Tibial artery (tissue), 4 donors: ENCODE measurements at regions of chr9 and their contacts with region 1.

Region 1: GRCh38 chr9:69971643-69972449 is 71.8 kb upstream of the MAMDC2 start:
- DNase-seq: peak; percentile 83
- H3K4me3 ChIP-seq: no peak overlapping the region
- H3K27ac ChIP-seq: no peak overlapping the region
- H3K4me1 ChIP-seq: peaks cover 0 to 15% (median 0%) of the 10 kb centered on the region in 4 donors
- H3K27me3 ChIP-seq: no peaks in the 10 kb centered on the region
- CTCF ChIP-seq: peak; percentile 87 to 92

Region 2: DNA sequence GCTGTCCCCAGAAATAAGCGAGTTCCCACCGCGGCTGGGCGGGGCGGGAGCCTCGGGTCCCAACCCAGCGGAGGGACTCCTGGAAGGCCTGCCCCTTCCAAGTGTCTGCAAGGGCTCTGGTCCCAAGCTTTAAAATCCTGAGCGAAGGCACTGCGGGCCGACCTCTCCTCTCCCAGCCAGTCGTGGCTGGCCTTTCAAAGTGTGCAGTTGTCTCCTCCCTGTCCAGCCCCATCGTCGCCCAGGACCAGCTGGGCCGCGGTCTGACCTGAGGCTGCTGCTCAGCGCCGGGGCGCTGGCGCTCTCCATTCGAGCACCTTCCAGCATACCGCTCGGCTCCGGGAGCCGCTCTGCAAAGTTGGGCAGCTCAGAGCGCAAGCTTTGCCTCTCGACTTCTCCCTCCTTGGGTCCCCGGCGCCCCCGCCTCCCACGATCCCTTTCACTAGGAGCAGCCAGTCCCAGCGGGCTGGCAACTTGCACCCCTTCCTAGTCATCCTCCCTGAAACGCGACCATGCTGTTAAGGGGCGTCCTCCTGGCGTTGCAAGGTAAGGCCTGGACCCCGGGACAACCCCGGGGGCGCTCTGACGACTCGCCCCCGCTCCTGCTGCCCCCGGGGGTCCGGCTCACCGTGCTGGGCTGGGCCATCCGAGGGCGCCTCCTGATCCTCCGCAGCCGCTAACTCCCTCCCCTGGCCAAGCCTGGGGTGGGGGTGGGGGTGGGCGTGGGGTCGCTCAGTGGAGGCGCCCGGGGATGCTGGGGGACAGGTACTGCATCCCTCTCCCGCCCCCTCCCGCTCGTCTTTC is 72.0 kb after region 1 on chr9 and contains the start of gene MAMDC2:
- intact Hi-C with region 1: loop called (anchors 10 kb)
- DNase-seq: peak; percentile 77 to 84
- H3K4me3 ChIP-seq: peak within 1 kb of the TSS; percentile 77 to 82
- H3K27ac ChIP-seq: peak within 1 kb of the TSS; percentile 86 to 89
- H3K4me1 ChIP-seq: peaks cover 0 to 58% (median 41%) of the 10 kb centered on the region in 4 donors
- H3K27me3 ChIP-seq: no peaks in the 10 kb centered on the region
- CTCF ChIP-seq: no peak

Region 3: GRCh38 chr9:70229579-70229978 is 257.7 kb after region 1 on chr9:
- intact Hi-C with region 1: loop called (anchors 10 kb)
- DNase-seq: no peak
- H3K4me3 ChIP-seq: no peak overlapping the region
- H3K27ac ChIP-seq: peak overlapping the region; percentile 42 to 43
- H3K4me1 ChIP-seq: peaks cover 0 to 17% (median 3%) of the 10 kb centered on the region in 4 donors
- H3K27me3 ChIP-seq: no peaks in the 10 kb centered on the region
- CTCF ChIP-seq: peak; percentile 14 to 27